ENCODE measurements at regions of chr2 and their contacts with region 1.

Region 1: DNA sequence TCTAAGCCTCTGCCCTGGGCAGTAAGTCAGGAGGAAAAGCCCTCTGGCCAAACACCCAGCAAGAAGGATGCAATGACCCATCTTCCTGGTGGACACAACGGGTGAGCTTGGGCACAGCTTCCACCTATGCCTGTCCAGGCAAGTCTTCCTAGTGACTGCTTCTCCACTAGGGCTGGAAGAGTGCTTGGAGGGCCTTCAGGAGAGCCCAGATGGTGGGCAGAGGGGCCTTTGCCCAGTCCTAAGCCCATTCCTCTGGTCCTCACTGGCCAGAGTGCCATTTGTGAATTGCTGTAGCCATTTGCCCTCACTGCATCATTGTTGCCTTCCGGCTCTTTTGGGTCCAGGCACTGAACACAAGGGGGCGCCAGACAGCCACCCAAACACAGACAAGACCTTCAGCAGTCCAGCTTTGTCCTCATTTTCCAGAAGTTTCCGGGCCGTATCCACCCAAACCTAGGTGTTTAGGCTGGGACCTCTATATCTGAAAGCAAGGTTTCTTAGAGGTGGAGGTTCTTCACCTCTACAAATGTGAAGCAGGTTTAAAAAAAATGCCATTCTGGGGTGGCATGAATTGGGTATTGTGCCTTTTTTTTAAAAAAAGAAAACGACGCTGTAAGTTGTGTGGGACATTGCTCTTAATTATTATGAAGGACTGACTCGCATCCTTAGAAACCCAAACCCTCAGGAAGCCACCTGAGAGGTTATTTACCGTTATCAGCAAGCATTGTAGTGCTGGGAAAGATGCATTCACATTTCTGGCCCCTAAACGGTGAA is 29.5 kb downstream of the PAX8 start:
- DNase-seq: peak; percentile 69 to 90 (median 82)
- ATAC-seq: peak; percentile 95
- H3K4me3 ChIP-seq: no peak overlapping the region
- H3K27ac ChIP-seq: no peak overlapping the region
- H3K4me1 ChIP-seq: no peaks in the 10 kb centered on the region
- H3K27me3 ChIP-seq: no peaks in the 10 kb centered on the region
- CTCF ChIP-seq: peak; percentile 88 to 90

Region 2: GRCh38 chr2:113370478-113371091 is 121.4 kb after region 1 on chr2:
- intact Hi-C with region 1: loop called in 1 of 2 experiments (anchors 5 kb)
- DNase-seq: peak in 3 of 4 donors; percentile 56 to 78 (median 67)
- ATAC-seq: peak; percentile 97
- H3K4me3 ChIP-seq: no peak overlapping the region
- H3K27ac ChIP-seq: no peak overlapping the region
- H3K4me1 ChIP-seq: no peaks in the 10 kb centered on the region
- H3K27me3 ChIP-seq: no peaks in the 10 kb centered on the region
- CTCF ChIP-seq: peak; percentile 43 to 58

Measured in left lung (tissue), 14 donors.